Heart left ventricle (tissue), 16 donors: ENCODE measurements at regions of chr3 and their contacts with region 1.

Region 1: GRCh38 chr3:149273096-149273751 is 51.6 kb upstream of the CP start:
- DNase-seq: peak in 2 of 5 donors; percentile 40 to 48
- ATAC-seq: peak; percentile 71 to 91 (median 82)
- H3K4me3 ChIP-seq: no peak overlapping the region
- H3K27ac ChIP-seq: peak overlapping the region in 3 of 12 donors; percentile 5 to 33 (median 32)
- H3K4me1 ChIP-seq: peaks cover 0 to 15% (median 3%) of the 10 kb centered on the region in 12 donors
- H3K27me3 ChIP-seq: no peaks in the 10 kb centered on the region
- CTCF ChIP-seq: peak; percentile 80 to 98 (median 96)
- POLR2A ChIP-seq: no peak

Region 2: GRCh38 chr3:148861277-148861869 is 411.9 kb before region 1 on chr3:
- intact Hi-C with region 1: loop called in 5 of 10 experiments (anchors 2 to 10 kb)
- DNase-seq: no peak
- ATAC-seq: no peak
- H3K4me3 ChIP-seq: no peak overlapping the region
- H3K27ac ChIP-seq: no peak overlapping the region
- H3K4me1 ChIP-seq: no peaks in the 10 kb centered on the region
- H3K27me3 ChIP-seq: peaks cover 0 to 23% (median 3%) of the 10 kb centered on the region in 9 donors
- CTCF ChIP-seq: peak; percentile 63 to 85 (median 72)
- POLR2A ChIP-seq: no peak

Region 3: DNA sequence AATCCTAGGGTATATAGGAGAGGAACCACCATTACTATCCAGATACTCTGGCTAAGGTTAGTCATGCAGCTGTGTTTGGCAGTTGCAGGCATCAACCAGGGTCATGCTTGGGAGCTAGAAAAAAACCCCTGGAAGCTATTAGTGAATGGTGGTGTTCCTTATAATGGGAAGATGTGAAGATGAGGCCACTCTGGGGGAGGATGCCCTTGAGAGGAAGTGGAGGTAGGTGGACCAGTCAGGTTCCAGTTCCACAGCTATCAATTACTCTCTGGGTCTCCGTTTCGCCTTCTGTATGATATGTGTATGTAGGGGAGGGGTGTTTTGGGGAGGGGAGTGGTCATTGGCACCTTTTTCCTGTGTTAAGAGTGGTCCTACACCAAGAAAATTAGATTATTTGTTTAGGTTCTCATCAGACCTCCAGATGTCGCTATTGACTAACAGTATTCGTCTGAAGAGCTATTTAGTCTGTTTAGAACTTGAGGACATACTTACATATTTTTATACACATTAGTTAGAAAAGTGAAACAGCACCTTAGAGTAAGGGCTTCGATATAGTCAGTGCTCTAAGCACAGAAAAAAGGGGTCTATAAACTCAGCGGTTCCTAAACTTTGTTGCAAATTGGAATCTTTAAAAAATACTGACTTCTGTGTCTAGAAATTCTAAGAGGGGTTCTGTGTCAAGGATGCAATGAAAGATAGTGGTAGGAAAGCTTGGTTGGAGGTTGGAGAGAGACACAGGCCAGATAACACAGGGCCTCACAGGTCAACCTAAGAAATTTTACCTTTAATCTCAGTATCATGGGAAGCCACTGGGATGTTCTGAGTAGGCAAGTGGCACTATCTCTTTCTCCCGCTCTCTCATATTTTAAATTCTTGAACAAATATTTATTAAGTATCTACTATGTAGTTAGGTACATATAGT is 152.9 kb before region 1 on chr3:
- intact Hi-C with region 1: loop called (anchors 1 to 2 kb)
- DNase-seq: no peak
- ATAC-seq: peak in 3 of 4 donors; percentile 53 to 82 (median 73)
- H3K4me3 ChIP-seq: no peak overlapping the region
- H3K27ac ChIP-seq: no peak overlapping the region
- H3K4me1 ChIP-seq: peaks cover 0 to 4% (median 0%) of the 10 kb centered on the region in 12 donors
- H3K27me3 ChIP-seq: no peaks in the 10 kb centered on the region
- CTCF ChIP-seq: peak; percentile 47 to 82 (median 66)
- POLR2A ChIP-seq: no peak

Region 4: GRCh38 chr3:149129326-149130205 is 143.7 kb before region 1 on chr3 and contains the start of gene HPS3:
- intact Hi-C with region 1: loop called in 1 of 10 experiments (anchors 2 kb)
- DNase-seq: peak; percentile 93 to 96 (median 93)
- ATAC-seq: peak; percentile 98 to 100 (median 100)
- H3K4me3 ChIP-seq: peak within 1 kb of the TSS; percentile 65 to 99 (median 92)
- H3K27ac ChIP-seq: peak within 1 kb of the TSS; percentile 51 to 91 (median 76)
- H3K4me1 ChIP-seq: peaks cover 0 to 43% (median 22%) of the 10 kb centered on the region in 12 donors
- H3K27me3 ChIP-seq: no peaks in the 10 kb centered on the region
- CTCF ChIP-seq: peak in 2 of 12 donors; percentile 19 to 27
- POLR2A ChIP-seq: peak; percentile 48 to 97
- total RNA-seq, gene HPS3: 4.4 to 15.6 (median 6.3) TPM

Region 5: DNA sequence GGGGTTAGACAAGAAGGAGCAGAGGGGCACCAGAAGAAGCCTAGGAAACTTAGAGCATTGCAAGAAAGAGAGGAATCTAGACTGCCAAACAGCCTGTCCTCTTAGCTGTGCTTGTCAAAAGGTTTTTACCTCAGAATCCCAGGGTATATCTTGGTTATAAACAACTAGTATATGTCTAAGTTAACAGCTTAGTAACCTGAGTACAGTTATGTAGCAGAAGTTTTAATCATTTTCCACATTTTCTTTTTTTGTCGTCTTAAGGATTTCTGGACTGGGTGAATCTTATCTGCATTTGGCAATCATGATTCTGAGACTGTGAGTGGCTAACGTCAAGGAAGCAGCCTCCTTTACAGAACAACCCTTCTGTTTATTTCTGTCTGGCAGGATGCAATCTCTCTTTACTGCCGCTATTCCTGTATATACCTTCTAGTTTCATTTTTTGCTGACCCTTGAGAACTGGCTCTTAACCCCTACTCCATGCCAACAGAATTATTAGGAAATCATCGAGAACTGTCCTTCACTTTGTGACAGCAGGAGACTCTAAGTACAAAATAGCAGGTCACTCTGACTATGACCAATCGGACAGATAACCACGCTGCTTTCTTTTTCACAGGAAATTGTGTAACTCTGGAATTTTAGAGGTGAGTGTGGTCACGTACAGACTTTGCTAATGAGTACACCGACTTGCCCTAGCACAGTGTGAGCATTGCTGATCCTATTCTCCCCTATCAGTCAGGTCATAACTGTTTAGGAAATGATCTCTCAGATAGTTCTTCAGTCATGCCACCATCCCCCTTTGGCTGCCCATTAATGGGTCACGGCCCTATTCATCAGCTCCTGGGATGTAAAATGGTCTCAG is 48.3 kb before region 1 on chr3:
- intact Hi-C with region 1: loop called in 1 of 10 experiments (anchors 5 kb)
- DNase-seq: no peak
- ATAC-seq: peak; percentile 63 to 93 (median 86)
- H3K4me3 ChIP-seq: peak overlapping the region in 11 of 12 donors; percentile 11 to 54 (median 40)
- H3K27ac ChIP-seq: peak overlapping the region; percentile 56 to 84 (median 70)
- H3K4me1 ChIP-seq: peaks cover 0 to 22% (median 7%) of the 10 kb centered on the region in 12 donors
- H3K27me3 ChIP-seq: no peaks in the 10 kb centered on the region
- CTCF ChIP-seq: no peak
- POLR2A ChIP-seq: peak in 1 of 2 donors; percentile 21

Region 6: DNA sequence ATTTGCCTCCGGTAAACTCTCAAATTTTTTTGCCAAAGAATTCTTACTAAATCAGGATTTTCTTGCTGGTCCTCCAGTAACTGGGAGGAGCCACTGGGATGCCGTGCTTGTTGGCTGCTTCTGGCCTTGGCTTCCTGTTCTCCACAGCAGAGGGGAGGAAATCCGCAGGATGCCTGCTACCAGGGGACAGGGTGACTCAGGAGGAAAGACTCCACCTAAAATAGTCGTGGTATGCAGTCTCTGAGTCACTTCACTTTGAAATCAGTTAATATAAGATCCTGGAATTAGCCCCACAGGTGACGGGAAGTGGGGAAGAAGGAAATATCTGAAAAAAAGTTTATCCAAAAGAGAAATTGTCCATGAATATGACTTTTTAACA is 66.7 kb after region 1 on chr3:
- intact Hi-C with region 1: no loop called
- DNase-seq: peak; percentile 79 to 91 (median 86)
- ATAC-seq: peak; percentile 94 to 99 (median 98)
- H3K4me3 ChIP-seq: peak overlapping the region in 4 of 12 donors; percentile 4 to 26 (median 15)
- H3K27ac ChIP-seq: peak overlapping the region; percentile 69 to 94 (median 88)
- H3K4me1 ChIP-seq: peaks cover 4 to 42% (median 26%) of the 10 kb centered on the region in 12 donors
- H3K27me3 ChIP-seq: no peaks in the 10 kb centered on the region
- CTCF ChIP-seq: no peak
- POLR2A ChIP-seq: no peak

Region 7: GRCh38 chr3:149473357-149474249 is 200.4 kb after region 1 on chr3:
- intact Hi-C with region 1: loop called in 2 of 10 experiments (anchors 5 to 10 kb)
- DNase-seq: no peak
- ATAC-seq: peak in 3 of 4 donors; percentile 45 to 70 (median 60)
- H3K4me3 ChIP-seq: no peak overlapping the region
- H3K27ac ChIP-seq: peak overlapping the region in 4 of 12 donors; percentile 22 to 38 (median 25)
- H3K4me1 ChIP-seq: peaks cover 0 to 26% (median 6%) of the 10 kb centered on the region in 12 donors
- H3K27me3 ChIP-seq: no peaks in the 10 kb centered on the region
- CTCF ChIP-seq: no peak
- POLR2A ChIP-seq: no peak

Region 8: GRCh38 chr3:149480325-149481017 is 207.2 kb after region 1 on chr3:
- intact Hi-C with region 1: loop called in 3 of 10 experiments (anchors 5 to 10 kb)
- DNase-seq: peak; percentile 75 to 84 (median 81)
- ATAC-seq: peak; percentile 84 to 98 (median 95)
- H3K4me3 ChIP-seq: no peak overlapping the region
- H3K27ac ChIP-seq: peak overlapping the region; percentile 35 to 79 (median 68)
- H3K4me1 ChIP-seq: peaks cover 0 to 19% (median 10%) of the 10 kb centered on the region in 12 donors
- H3K27me3 ChIP-seq: no peaks in the 10 kb centered on the region
- CTCF ChIP-seq: peak; percentile 74 to 94 (median 85)
- POLR2A ChIP-seq: no peak